H1 (cell line): ENCODE measurements at regions of chrX and their contacts with region 1.

Region 1: DNA sequence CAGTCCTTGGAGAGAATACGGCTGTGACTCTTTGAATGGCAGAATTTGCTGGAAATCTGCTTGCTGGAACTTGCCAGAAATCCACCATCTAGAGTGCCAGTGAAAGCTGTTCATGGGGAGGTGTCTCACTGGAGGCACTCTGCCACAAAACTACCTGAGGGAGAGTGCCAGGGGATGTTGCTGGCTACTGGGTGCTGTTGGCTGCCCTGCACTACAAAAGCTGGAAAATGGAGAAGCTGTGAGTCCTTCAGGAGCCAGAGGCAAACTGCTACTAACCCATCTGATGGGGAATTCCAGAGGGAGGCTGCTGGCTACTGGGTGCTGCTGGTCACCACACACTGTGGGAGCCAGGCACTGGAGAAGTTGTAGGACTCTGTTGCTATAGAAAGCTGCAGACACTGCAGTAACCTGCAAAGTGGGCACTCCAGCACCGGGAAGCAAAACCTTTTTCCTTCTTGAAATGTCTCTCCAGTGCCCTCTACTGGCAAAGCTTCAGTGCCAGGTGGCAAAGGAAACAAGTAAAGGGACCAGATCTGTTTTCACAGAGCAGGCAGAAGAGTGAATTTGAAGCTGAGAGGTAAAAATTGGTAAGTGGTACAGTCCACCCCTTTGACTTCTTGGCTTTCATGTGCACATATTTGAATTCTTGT is 47.8 kb upstream of the HSD17B10 start:
- DNase-seq: peak in 1 of 2 experiments; percentile 61
- H3K4me3 ChIP-seq: no peak overlapping the region
- H3K27ac ChIP-seq: no peak overlapping the region
- H3K4me1 ChIP-seq: peaks cover 0 to 3% (median 0%) of the 10 kb centered on the region in 4 experiments; a peak in 4 of 7 replicates
- H3K27me3 ChIP-seq: no peaks in the 10 kb centered on the region
- CTCF ChIP-seq: peak; percentile 19 to 69 (median 55)
- EP300 ChIP-seq: no peak
- POLR2A ChIP-seq: no peak
- RAD21 ChIP-seq: peak; percentile 55 to 68

Region 2: GRCh38 chrX:53337101-53337500 is 144.8 kb before region 1 on chrX:
- CTCF ChIA-PET with region 1: no interaction called
- POLR2A ChIA-PET with region 1: no interaction called
- DNase-seq: no peak
- H3K4me3 ChIP-seq: no peak overlapping the region
- H3K27ac ChIP-seq: no peak overlapping the region
- H3K4me1 ChIP-seq: no peaks in the 10 kb centered on the region
- H3K27me3 ChIP-seq: no peaks in the 10 kb centered on the region
- CTCF ChIP-seq: no peak
- EP300 ChIP-seq: no peak
- POLR2A ChIP-seq: no peak
- RAD21 ChIP-seq: no peak

Region 3: DNA sequence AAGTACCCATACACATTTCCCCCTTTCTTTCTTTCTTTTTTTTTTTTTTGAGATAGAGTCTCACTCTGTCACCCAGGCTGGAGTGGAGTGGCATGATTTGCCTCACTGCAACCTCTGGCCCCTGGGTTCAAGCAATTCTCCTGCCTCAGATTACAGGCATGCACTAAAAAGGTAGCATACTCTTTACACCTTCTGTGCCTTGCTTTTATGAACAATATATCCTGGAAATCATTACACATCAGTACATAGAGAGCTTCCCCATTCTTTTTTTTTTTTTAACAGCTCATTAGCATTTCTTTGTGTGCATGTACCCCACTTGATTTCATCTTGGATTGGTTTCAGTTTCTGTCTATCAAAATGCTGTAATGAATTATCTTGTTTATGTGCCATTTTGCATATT is 29.1 kb before region 1 on chrX:
- CTCF ChIA-PET with region 1: interaction called, 17 read pairs
- POLR2A ChIA-PET with region 1: no interaction called
- DNase-seq: no peak
- H3K4me3 ChIP-seq: no peak overlapping the region
- H3K27ac ChIP-seq: no peak overlapping the region
- H3K4me1 ChIP-seq: no peaks in the 10 kb centered on the region
- H3K27me3 ChIP-seq: no peaks in the 10 kb centered on the region
- CTCF ChIP-seq: no peak
- EP300 ChIP-seq: no peak
- POLR2A ChIP-seq: no peak
- RAD21 ChIP-seq: no peak

Region 4: DNA sequence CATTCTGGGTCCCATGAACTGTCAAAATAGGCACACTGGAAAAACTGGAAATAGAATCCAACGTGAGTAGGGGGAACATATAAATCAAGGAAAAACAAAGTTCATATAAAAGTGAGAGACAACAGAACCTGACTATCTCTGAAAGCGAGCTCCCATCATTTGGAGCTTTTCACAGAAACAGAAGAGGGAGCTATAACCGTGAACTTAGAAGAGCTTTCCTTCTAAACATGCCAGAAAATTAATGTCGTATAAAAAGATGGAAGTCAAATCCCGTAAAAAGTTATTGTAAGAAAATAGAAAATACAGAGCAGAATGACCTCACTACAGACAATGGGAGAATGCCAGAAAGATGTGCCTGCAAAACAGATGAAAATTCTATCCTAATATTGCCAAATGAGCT is 23.9 kb before region 1 on chrX:
- CTCF ChIA-PET with region 1: interaction called, 14 read pairs
- POLR2A ChIA-PET with region 1: no interaction called
- DNase-seq: no peak
- H3K4me3 ChIP-seq: no peak overlapping the region
- H3K27ac ChIP-seq: no peak overlapping the region
- H3K4me1 ChIP-seq: no peaks in the 10 kb centered on the region
- H3K27me3 ChIP-seq: no peaks in the 10 kb centered on the region
- CTCF ChIP-seq: peak in 1 of 3 experiments; percentile 10; a peak in 1 of 4 replicates
- EP300 ChIP-seq: no peak
- POLR2A ChIP-seq: no peak
- RAD21 ChIP-seq: peak; percentile 11 to 17; a peak in 1 of 4 replicates

Region 5: GRCh38 chrX:53471346-53471745 is 10.6 kb before region 1 on chrX:
- CTCF ChIA-PET with region 1: interaction called, 20 read pairs
- POLR2A ChIA-PET with region 1: no interaction called
- DNase-seq: no peak
- H3K4me3 ChIP-seq: no peak overlapping the region
- H3K27ac ChIP-seq: no peak overlapping the region
- H3K4me1 ChIP-seq: no peaks in the 10 kb centered on the region
- H3K27me3 ChIP-seq: no peaks in the 10 kb centered on the region
- CTCF ChIP-seq: no peak
- EP300 ChIP-seq: no peak
- POLR2A ChIP-seq: no peak
- RAD21 ChIP-seq: no peak

Region 6: DNA sequence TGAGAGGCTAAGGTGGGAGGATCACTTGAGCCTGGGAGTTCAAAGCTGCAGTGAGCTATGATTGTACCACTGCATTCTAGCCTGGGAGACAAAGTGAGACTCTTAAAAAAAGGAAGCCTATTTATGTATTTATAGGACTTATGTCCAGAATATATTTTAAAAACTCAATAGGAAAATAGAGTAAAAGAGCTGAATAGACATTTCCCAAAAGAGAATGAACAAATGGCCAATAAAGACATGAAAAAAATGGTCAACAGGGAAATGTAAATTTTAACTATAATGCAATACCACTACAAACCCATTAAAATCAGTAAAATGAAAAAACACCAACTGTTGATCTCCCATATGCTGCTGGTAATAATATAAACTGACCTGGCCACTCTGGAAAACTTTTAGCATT is 89.6 kb after region 1 on chrX:
- CTCF ChIA-PET with region 1: no interaction called
- POLR2A ChIA-PET with region 1: no interaction called
- DNase-seq: no peak
- H3K4me3 ChIP-seq: no peak overlapping the region
- H3K27ac ChIP-seq: no peak overlapping the region
- H3K4me1 ChIP-seq: no peaks in the 10 kb centered on the region
- H3K27me3 ChIP-seq: no peaks in the 10 kb centered on the region
- CTCF ChIP-seq: no peak
- EP300 ChIP-seq: no peak
- POLR2A ChIP-seq: no peak
- RAD21 ChIP-seq: no peak